H1 (cell line): ENCODE measurements at regions of chr10 and their contacts with region 1.

Region 1: GRCh38 chr10:109450702-109451101 is 472.6 kb downstream of the XPNPEP1 start:
- DNase-seq: no peak
- H3K4me3 ChIP-seq: no peak overlapping the region
- H3K27ac ChIP-seq: no peak overlapping the region
- H3K4me1 ChIP-seq: no peaks in the 10 kb centered on the region
- H3K27me3 ChIP-seq: peaks cover 0 to 4% (median 3%) of the 10 kb centered on the region in 4 experiments; a peak in 5 of 7 replicates
- CTCF ChIP-seq: no peak
- EP300 ChIP-seq: no peak
- POLR2A ChIP-seq: no peak
- RAD21 ChIP-seq: no peak

Region 2: DNA sequence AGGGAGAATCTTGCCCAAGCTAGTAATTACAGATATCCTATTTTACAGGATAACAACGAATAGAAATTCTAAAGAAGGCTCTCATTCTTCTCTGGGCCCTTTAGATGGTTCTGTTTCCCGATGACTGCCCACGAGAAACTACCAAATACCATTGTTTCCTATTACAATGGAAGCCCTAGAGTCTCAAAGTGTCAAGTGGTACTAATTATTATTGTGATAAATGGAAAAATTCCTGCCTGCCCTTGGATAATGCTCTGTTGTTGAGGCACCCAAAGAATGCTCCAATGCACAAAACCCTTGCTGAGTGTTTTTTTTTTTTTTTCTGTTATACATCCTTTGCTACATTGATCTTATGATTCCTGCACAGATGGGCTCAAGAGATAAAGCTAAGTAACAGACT is 31.9 kb before region 1 on chr10:
- CTCF ChIA-PET with region 1: interaction called, 17 read pairs
- POLR2A ChIA-PET with region 1: no interaction called
- DNase-seq: no peak
- H3K4me3 ChIP-seq: no peak overlapping the region
- H3K27ac ChIP-seq: no peak overlapping the region
- H3K4me1 ChIP-seq: no peaks in the 10 kb centered on the region; a peak in 1 of 7 replicates
- H3K27me3 ChIP-seq: no peaks in the 10 kb centered on the region
- CTCF ChIP-seq: no peak
- EP300 ChIP-seq: no peak
- POLR2A ChIP-seq: no peak
- RAD21 ChIP-seq: no peak